Panc1 (cell line): ENCODE measurements at regions of chr1 and their contacts with region 1.

Region 1: DNA sequence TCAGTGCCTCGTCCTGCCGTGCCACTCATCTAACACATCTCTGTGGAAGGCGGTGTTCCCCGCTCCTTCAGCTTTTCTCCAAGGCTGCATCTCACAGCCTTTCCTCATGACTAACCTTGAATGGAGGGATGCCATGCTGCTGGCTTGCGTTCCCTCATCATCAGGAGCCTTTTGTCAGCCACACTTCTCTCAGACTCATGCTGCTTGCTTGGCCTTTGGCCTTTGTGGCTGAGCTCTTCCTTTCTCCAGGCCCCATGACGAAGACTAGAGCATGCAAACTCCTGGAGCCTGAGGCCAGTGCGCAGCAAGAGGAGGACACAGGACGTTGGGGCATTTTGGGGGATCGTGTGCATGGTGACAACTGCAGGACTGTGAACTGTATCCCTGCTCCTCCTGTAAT is 70.8 kb downstream of the SYT2 start:
- DNase-seq: no peak
- ATAC-seq: no peak
- H3K4me3 ChIP-seq: no peak overlapping the region
- H3K27ac ChIP-seq: no peak overlapping the region
- H3K4me1 ChIP-seq: 0 out of 2 replicates have a peak, but pooled peaks cover 6% of the 10 kb centered on the region
- H3K27me3 ChIP-seq: peaks cover 3% of the 10 kb centered on the region; the same call in 1 of the 2 replicates
- CTCF ChIP-seq: no peak

Region 2: DNA sequence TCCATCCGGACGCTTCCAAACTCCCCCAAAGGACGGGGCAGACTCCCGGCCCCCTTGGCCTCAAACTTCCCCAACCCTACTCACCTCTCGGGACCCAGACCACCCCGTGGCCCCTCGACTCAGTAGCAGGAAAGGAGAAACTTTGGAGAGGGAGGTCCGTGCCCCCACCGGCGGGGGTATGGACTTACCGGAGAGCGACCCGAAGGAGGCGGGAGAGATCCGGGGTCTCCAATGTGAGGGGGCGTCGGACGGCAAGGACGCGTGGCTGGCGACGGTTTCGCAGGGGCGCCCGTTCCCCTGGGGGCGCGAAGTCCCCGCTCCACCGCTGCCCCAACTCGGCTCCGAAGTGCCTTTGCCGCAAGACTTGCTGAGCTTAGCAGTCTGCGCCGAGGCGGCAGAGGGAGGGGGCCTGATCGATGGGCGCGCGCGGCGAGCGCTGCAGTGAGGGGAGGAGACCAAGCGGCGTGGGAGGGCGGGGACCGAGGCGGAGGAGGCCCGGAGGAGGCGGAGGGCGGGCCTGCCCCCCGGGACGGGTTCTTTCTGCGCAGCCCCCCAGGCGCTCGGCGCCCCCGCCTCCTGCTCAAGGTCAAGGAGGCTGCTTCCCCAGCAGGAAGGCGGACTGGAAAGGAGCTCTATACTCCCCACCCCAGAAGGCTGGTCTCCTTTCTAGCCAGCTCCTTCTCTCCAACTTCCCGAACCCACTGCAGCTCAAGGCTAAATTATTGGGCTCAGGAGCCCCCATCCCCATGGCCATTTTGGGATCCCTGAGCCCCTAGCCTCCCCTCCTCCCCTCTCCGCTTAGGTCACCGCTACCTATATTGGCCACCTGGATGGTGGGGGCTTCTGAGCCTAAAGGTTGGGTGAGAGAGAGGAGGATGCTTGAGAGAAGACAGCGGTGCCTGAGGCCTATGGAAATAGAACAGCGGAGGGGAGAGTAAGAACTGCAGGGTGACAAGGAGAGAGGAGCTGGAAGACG is 70.9 kb after region 1 on chr1 and contains the start of gene SYT2:
- CTCF ChIA-PET with region 1: no interaction called
- POLR2A ChIA-PET with region 1: no interaction called
- in situ Hi-C with region 1: no loop called
- intact Hi-C with region 1: loop called (anchors 2 kb)
- DNase-seq: no peak
- ATAC-seq: peak; percentile 70
- H3K4me3 ChIP-seq: peak within 1 kb of the TSS; percentile 26 to 43
- H3K27ac ChIP-seq: no peak within 1 kb of the TSS
- H3K4me1 ChIP-seq: no peaks in the 10 kb centered on the region
- H3K27me3 ChIP-seq: peaks cover 16% of the 10 kb centered on the region
- CTCF ChIP-seq: no peak
- total RNA-seq, gene SYT2: 0.03 TPM